ENCODE measurements at regions of chr13 and their contacts with region 1.

Region 1: GRCh38 chr13:98869408-98870090 is 108.3 kb downstream of the DOCK9 start:
- DNase-seq: no peak
- H3K4me3 Mint-ChIP-seq: no peak overlapping the region
- H3K27ac Mint-ChIP-seq: no peak overlapping the region
- H3K4me1 Mint-ChIP-seq: peaks cover 43% of the 10 kb centered on the region
- H3K27me3 Mint-ChIP-seq: no peaks in the 10 kb centered on the region

Region 2: GRCh38 chr13:98927951-98928927 is 58.7 kb after region 1 on chr13:
- intact Hi-C with region 1: no loop called
- DNase-seq: no peak
- H3K4me3 Mint-ChIP-seq: no peak overlapping the region
- H3K27ac Mint-ChIP-seq: no peak overlapping the region
- H3K4me1 Mint-ChIP-seq: peaks cover 7% of the 10 kb centered on the region
- H3K27me3 Mint-ChIP-seq: no peaks in the 10 kb centered on the region

Region 3: GRCh38 chr13:98986226-98986846 is 116.8 kb after region 1 on chr13:
- intact Hi-C with region 1: loop called (anchors 5 kb)
- DNase-seq: no peak
- H3K4me3 Mint-ChIP-seq: no peak overlapping the region
- H3K27ac Mint-ChIP-seq: no peak overlapping the region
- H3K4me1 Mint-ChIP-seq: peaks cover 60% of the 10 kb centered on the region
- H3K27me3 Mint-ChIP-seq: no peaks in the 10 kb centered on the region

Region 4: GRCh38 chr13:99033814-99034213 is 164.3 kb after region 1 on chr13:
- intact Hi-C with region 1: loop called (anchors 1 kb)
- DNase-seq: no peak
- H3K4me3 Mint-ChIP-seq: no peak overlapping the region
- H3K27ac Mint-ChIP-seq: no peak overlapping the region
- H3K4me1 Mint-ChIP-seq: peaks cover 23% of the 10 kb centered on the region
- H3K27me3 Mint-ChIP-seq: no peaks in the 10 kb centered on the region

Region 5: GRCh38 chr13:99269627-99270241 is 400.2 kb after region 1 on chr13:
- intact Hi-C with region 1: loop called (anchors 5 kb)
- DNase-seq: no peak
- H3K4me3 Mint-ChIP-seq: no peak overlapping the region
- H3K27ac Mint-ChIP-seq: no peak overlapping the region
- H3K4me1 Mint-ChIP-seq: peaks cover 55% of the 10 kb centered on the region
- H3K27me3 Mint-ChIP-seq: no peaks in the 10 kb centered on the region